Ovary (tissue), 10 donors: ENCODE measurements at regions of chr9 and their contacts with region 1.

Region 1: GRCh38 chr9:19286634-19287200 is 56.2 kb downstream of the DENND4C start:
- DNase-seq: no peak
- H3K4me3 ChIP-seq: no peak overlapping the region
- H3K27ac ChIP-seq: no peak overlapping the region
- H3K4me1 ChIP-seq: peaks cover 8% of the 10 kb centered on the region
- H3K27me3 ChIP-seq: no peaks in the 10 kb centered on the region
- CTCF ChIP-seq: no peak
- EP300 ChIP-seq: no peak
- POLR2A ChIP-seq: no peak

Region 2: DNA sequence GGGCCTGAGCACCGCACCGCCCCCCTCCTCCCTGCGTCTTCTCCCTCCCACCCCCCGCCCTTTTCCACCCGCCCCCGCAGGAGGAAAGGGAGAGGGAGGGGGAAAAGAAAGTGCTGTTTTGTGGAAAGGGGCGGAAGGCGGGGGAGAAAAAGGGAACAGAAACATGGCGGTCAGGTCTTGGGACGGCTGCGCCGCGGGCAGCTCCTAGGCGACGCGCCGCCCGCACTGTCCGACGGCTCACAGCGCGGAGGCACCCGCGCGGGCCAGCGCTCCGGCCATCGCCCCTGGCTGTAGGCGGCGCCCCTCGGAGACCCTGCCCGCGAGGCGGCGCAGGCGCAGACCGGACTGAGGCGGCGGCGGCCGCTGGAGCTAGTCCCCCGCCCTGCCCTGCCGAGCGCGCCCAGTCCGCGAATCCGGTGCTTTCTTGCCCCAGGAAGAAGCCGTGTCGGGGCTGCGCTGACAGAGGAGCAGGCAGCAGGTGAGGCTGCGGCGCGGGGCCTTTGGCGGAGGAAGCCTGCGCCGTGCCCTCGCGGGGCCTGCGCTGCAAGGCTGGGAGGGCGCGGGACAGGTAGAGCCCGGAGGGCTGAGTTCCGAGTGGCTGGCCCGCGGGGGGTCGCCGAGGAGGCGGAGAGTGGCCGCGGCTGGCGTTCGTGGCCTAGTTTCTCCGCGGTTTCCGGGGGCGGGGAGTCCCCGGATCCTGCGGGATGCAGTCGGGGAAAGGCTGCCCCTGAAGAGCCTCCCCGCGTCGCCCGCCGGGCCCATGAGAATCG is 56.2 kb before region 1 on chr9 and contains the start of gene DENND4C:
- intact Hi-C with region 1: loop called in 1 of 4 experiments (anchors 10 kb)
- DNase-seq: peak; percentile 81 to 89 (median 86)
- H3K4me3 ChIP-seq: peak within 1 kb of the TSS; percentile 86
- H3K27ac ChIP-seq: peak within 1 kb of the TSS; percentile 95 to 98
- H3K4me1 ChIP-seq: peaks cover 3% of the 10 kb centered on the region
- H3K27me3 ChIP-seq: no peaks in the 10 kb centered on the region
- CTCF ChIP-seq: peak in 1 of 3 donors; percentile 46
- EP300 ChIP-seq: no peak
- POLR2A ChIP-seq: peak; percentile 71
- total RNA-seq, gene DENND4C: 52.6 to 83.9 (median 60.5) TPM